ENCODE measurements at regions of chr1 and their contacts with region 1.

Region 1: GRCh38 chr1:54950369-54951163 is 29.9 kb upstream of the TMEM61 start:
- DNase-seq: peak; percentile 70
- H3K4me3 ChIP-seq: peak overlapping the region; percentile 29; the same call in 1 of the 2 replicates
- H3K27ac ChIP-seq: no peak overlapping the region
- H3K27me3 ChIP-seq: no peaks in the 10 kb centered on the region
- CTCF ChIP-seq: peak; percentile 79

Region 2: GRCh38 chr1:54962612-54963395 is 12.2 kb after region 1 on chr1:
- CTCF ChIA-PET with region 1: interaction called, 19 read pairs
- POLR2A ChIA-PET with region 1: no interaction called
- DNase-seq: no peak
- H3K4me3 ChIP-seq: no peak overlapping the region
- H3K27ac ChIP-seq: no peak overlapping the region
- H3K27me3 ChIP-seq: no peaks in the 10 kb centered on the region
- CTCF ChIP-seq: no peak

Region 3: DNA sequence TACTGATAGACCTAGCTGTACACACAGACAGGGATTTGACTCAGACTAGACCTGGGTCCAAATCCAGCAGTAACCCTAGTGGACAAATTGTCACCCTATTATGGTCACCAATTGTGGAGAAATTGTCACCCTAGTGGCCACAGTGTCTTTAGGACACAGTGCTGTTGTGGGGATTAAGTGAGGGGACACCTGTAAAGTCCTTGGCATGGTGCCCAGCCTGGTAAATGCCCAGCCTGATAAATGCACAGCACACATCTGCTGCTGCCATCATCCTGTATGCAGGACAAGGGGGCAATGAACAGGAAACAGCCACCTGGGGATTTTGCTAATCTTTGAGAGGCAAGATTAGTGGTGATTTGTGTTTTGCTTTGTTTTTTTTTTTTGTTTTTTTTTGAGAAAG is 32.2 kb after region 1 on chr1:
- CTCF ChIA-PET with region 1: interaction called, 35 read pairs
- POLR2A ChIA-PET with region 1: interaction called, 3 read pairs
- DNase-seq: no peak
- H3K4me3 ChIP-seq: no peak overlapping the region
- H3K27ac ChIP-seq: no peak overlapping the region
- H3K27me3 ChIP-seq: peaks cover 59% of the 10 kb centered on the region
- CTCF ChIP-seq: no peak

Measured in AG04450 (cell line).